ENCODE measurements at regions of chr13 and their contacts with region 1.

Region 1: GRCh38 chr13:99366075-99366987 is 59.1 kb upstream of the GPR183 start:
- DNase-seq: no peak
- H3K4me3 Mint-ChIP-seq: no peak overlapping the region
- H3K27ac Mint-ChIP-seq: no peak overlapping the region
- H3K4me1 Mint-ChIP-seq: peaks cover 64% of the 10 kb centered on the region
- H3K27me3 Mint-ChIP-seq: no peaks in the 10 kb centered on the region

Region 2: DNA sequence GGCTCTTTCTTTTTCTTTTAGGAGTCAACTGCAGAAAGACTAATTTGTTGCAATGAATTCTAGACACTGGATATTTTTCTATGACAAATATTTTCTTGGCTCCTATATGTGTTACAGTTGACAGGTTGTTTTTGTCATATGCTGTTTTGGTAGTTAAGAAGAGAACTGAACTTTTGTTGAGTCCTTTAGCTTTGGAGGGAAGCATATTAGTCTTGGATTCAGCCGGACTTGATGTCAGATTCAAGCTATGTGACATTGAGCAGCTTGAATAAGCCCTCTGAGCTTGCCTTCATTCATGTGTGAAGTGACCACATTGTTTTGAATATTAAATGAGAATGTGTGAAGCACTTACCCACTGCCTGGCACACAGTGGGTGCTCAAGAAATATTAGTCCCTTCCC is 1007.4 kb before region 1 on chr13:
- intact Hi-C with region 1: no loop called
- DNase-seq: no peak
- H3K4me3 Mint-ChIP-seq: no peak overlapping the region
- H3K27ac Mint-ChIP-seq: no peak overlapping the region
- H3K4me1 Mint-ChIP-seq: no peaks in the 10 kb centered on the region
- H3K27me3 Mint-ChIP-seq: peaks cover 2% of the 10 kb centered on the region

Region 3: GRCh38 chr13:99331881-99332293 is 34.4 kb before region 1 on chr13:
- intact Hi-C with region 1: no loop called
- DNase-seq: no peak
- H3K4me3 Mint-ChIP-seq: no peak overlapping the region
- H3K27ac Mint-ChIP-seq: no peak overlapping the region
- H3K4me1 Mint-ChIP-seq: peaks cover 31% of the 10 kb centered on the region
- H3K27me3 Mint-ChIP-seq: no peaks in the 10 kb centered on the region

Region 4: DNA sequence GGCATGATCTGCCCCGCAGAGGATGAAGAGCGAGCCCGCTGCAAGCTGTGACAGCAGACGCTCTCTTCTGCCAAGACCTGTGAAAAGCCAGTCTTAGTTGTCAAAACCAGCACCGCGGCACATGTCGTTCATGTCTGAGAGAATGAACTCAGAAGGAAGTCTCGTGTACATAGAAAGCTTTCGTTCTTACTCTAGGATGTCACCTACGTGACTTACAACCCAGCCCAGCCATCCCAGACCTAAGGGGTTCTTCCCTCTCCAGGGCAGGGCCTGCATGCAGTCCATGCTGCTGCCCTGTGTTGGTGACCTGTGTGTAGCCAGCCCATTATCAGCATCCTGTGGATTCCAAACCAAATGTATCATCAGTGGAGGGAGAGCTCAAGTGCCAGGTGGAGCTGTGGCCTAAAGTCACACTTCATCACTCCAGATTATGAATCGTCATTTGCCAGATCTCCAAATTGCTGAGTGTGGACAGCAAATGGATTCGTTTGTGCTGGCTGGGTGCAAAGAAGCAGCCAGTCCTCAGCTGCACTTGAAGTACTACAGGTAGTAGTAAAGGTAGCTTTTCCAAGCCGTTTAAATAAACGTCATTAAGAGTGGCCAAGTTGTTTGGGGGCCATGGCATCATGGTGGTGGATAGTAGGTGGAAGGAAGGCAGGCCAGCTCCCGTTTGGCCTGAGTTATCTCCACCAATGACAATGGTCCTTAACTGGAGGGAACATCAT is 14.8 kb after region 1 on chr13:
- intact Hi-C with region 1: loop called (anchors 1 kb)
- DNase-seq: peak; percentile 88
- H3K4me3 Mint-ChIP-seq: peak overlapping the region; percentile 56
- H3K27ac Mint-ChIP-seq: peak overlapping the region; percentile 88
- H3K4me1 Mint-ChIP-seq: peaks cover 65% of the 10 kb centered on the region
- H3K27me3 Mint-ChIP-seq: no peaks in the 10 kb centered on the region

Region 5: DNA sequence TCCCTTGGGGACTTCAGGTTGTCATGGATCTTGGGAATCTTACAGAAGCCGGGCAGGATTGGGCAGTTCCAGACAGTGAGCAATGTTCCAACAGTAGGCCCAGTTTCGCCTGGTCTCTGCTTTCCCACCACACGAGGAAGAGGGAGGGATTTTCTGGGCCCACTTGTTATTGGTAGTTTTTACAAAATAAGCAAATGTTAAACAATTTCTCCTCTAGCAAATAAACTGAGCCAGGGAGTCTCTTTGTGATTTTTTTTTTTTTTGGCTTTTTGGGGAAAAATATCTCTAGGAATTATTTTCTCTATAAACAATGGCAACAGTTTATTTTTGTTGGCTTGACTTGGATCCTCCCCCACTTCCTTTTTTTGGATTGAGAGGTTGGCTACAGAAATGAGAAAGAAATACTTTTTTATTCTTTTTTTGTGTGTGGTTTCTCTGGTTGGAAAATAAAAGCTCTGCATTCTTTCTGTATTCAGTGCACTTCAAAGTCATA is 224.2 kb after region 1 on chr13:
- intact Hi-C with region 1: no loop called
- DNase-seq: no peak
- H3K4me3 Mint-ChIP-seq: no peak overlapping the region
- H3K27ac Mint-ChIP-seq: no peak overlapping the region
- H3K4me1 Mint-ChIP-seq: no peaks in the 10 kb centered on the region
- H3K27me3 Mint-ChIP-seq: peaks cover 25% of the 10 kb centered on the region

Measured in activated CD4-positive, alpha-beta T cell treated with anti-CD3 and anti-CD28 coated beads, Interleukin-2, amount 10 ng/mL, durations not matched to agents 24 days and 14 days (primary cell).